Activated CD4-positive, alpha-beta memory T cell treated with anti-CD3 and anti-CD28 coated beads for 36 hours (primary cell): ENCODE measurements at regions of chr10 and their contacts with region 1.

Region 1: DNA sequence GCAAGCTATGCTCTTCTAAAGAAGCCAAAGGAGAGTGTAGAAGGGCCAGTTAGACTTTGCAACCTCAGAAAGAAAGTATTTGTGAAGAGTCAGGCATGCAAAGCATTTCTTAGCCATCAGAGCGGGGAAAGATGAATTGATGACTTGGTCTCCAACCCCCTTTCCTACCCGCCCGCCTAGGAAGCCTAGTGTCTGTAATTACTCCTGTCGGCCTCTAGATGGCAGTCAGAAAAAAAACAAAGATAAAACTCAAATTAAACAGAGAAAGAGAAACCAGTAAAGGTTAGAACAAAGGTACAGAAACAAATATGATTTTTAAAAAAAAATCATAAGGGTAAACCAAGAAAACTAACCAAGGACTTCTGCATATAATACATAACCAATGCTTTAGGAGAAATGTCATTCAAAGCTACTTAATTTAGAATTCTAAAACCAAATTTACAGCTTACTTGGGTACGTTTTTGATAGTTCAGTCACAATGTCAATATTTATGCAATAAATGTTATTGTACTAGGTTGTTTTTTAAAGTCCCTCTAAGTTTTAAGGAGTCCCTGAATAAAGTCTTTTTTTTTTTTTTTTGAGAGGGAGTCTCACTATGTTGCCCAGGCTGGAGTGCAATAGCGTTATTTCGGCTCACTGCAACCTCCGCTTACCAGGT is 97.6 kb downstream of the LYZL1 start:
- DNase-seq: peak; percentile 27
- H3K4me3 Mint-ChIP-seq: no peak overlapping the region
- H3K27ac Mint-ChIP-seq: no peak overlapping the region
- H3K4me1 Mint-ChIP-seq: no peaks in the 10 kb centered on the region
- H3K27me3 Mint-ChIP-seq: peaks cover 3% of the 10 kb centered on the region

Region 2: DNA sequence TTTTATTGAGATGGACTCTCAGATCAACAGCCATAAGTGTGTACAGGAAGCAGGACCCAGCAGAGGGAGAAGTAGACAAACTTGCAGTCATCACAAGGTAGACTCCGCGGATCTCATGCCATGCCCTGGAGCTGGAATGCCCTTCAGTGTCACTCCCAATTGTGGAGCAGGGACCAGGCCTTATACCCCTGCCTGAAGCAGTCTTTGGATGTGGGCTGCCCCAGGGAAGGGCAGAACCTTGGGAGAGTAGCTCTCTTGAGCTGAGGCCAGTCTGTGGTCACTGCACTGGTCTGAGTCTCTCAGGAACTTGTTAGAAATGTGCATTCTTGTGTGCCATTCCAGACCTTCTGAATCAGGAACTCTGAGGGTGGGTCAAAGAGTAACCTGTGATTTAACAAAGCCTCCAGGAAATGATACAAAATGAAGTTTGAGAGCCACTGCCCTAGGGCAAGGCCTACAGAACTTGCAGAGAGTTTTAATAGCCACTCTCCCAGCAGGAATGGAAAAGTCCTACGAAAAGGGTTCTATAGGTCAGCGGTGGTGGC is 29.6 kb before region 1 on chr10:
- CTCF ChIA-PET with region 1: no interaction called
- POLR2A ChIA-PET with region 1: no interaction called
- intact Hi-C with region 1: no loop called
- DNase-seq: no peak
- H3K4me3 Mint-ChIP-seq: no peak overlapping the region
- H3K27ac Mint-ChIP-seq: no peak overlapping the region
- H3K4me1 Mint-ChIP-seq: no peaks in the 10 kb centered on the region
- H3K27me3 Mint-ChIP-seq: no peaks in the 10 kb centered on the region

Region 3: DNA sequence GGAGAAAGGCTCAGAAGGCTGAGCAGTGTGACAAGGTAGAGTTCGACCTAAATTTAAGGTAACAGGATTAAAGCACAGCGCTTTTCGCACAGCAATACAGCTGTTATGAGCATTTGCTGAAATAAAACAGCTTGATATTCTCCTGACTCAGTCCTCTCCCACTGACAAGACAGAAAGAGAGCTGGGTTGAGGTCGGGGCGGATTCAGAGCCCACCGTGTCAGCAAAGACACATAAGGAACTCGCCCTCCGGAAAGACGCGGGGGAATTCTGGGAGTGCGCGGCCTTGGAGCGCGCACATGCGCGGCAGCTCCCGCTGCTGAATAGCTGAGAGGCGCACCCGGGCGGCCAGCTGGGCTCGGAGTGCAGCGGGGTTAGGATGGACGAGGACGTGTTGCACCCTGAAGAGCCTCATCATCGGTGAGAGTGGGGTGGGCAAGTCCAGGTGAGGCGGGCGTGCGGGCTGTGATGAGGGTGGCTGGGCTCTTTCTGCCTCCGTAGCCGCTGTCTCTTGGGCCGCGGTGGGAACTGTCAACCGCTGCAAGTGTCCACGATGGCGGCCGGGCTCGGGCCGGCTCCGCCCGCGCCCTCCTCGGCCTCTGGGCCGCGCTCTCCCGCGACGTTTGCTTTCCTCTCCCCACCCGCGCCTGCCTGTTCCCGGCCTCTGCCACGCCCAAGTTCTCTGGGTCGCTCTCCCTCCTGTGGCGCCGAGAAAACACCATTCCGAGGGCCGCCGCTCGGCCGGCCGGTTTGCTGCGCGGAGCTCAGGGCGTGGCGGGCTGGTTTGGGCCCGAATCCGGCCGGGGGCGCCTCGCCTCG is 23.0 kb after region 1 on chr10:
- CTCF ChIA-PET with region 1: interaction called, 15 read pairs
- POLR2A ChIA-PET with region 1: no interaction called
- intact Hi-C with region 1: no loop called
- DNase-seq: peak; percentile 58
- H3K4me3 Mint-ChIP-seq: peak overlapping the region; percentile 87
- H3K27ac Mint-ChIP-seq: peak overlapping the region; percentile 78
- H3K4me1 Mint-ChIP-seq: peaks cover 32% of the 10 kb centered on the region
- H3K27me3 Mint-ChIP-seq: no peaks in the 10 kb centered on the region